HEK293 (cell line): ENCODE measurements at regions of chr17 and their contacts with region 1.

Region 1: DNA sequence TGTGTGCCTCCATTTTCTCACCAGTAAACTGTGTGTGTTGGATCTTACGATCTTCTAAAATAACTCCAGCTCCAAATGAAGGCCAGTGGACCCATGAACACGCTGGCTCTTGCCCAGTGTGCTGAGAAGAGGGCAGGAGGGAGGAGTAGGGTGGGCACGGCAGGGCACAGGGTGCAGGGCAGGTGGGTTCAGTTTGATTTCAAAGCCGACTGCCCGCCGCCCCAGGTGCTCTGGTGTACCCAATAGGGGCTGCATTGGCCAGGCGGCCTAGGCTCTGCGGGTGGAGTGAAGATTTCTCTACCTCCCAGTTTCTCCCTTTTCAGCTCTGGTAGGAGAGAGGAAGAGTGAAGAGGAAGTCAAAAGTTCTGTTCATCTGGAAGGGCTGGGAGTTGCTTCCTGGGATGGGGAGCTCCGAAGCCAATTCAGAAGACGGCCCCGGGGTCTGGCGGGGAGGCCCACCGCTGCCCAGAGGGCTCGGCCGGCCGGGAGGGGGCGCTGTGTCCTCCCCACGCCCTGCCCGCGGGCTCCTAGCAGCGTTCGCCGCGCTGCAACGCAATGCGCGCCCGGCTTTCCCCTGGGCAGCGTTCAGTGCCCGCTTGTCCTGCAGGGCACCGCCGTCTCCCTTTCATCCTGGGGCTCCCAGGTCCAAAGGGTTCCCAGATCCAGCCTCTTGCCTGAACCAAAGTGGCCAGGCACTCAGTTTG is 1.1 kb upstream of the CRHR1 start:
- H3K4me3 ChIP-seq: peak overlapping the region; percentile 56
- H3K27ac ChIP-seq: peak overlapping the region; percentile 51; the same call in 1 of the 2 replicates
- H3K4me1 ChIP-seq: no peaks in the 10 kb centered on the region
- CTCF ChIP-seq: peak; percentile 82

Region 2: GRCh38 chr17:45640141-45640850 is 142.7 kb before region 1 on chr17:
- CTCF ChIA-PET with region 1: interaction called, 18 read pairs
- POLR2A ChIA-PET with region 1: interaction called, 3 read pairs
- H3K4me3 ChIP-seq: no peak overlapping the region
- H3K27ac ChIP-seq: no peak overlapping the region
- H3K4me1 ChIP-seq: no peaks in the 10 kb centered on the region
- CTCF ChIP-seq: peak; percentile 89

Region 3: DNA sequence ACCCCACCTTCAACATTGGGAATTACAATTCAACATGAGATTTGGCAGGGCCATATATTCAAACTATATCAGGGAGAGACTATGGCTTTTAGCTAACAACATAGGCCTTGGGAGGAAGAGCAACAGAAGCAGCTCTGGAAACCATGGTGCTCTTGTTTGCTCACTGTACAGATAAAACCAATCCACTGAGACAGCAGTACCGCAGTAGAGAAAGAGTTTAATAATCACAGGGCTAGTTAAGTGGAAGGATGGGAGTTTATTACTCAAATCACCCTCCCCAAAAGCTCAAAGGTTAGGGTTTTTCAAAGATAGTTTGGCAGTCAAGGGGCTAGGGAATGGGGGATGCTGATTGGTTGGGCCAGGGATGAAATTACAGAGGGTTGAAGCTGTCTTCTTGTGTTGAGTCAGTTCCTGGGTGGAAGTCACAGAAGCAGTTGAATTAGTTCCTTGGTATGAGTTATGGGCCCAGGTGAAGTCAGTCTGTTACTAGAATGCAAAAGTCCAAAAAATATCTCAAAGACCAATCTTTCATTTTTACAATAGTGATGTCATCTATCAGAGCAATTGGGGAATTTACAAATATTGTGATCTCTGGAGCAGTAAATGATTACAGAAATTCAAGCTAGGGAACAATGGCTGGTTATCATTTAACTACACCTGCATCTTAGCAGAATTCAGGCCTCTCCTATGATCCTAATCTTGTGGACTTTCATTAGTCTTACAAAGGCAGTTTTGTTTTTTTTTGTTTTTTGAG is 51.4 kb before region 1 on chr17:
- CTCF ChIA-PET with region 1: interaction called, 12 read pairs
- POLR2A ChIA-PET with region 1: no interaction called
- H3K4me3 ChIP-seq: no peak overlapping the region
- H3K27ac ChIP-seq: no peak overlapping the region
- H3K4me1 ChIP-seq: no peaks in the 10 kb centered on the region
- CTCF ChIP-seq: no peak

Region 4: DNA sequence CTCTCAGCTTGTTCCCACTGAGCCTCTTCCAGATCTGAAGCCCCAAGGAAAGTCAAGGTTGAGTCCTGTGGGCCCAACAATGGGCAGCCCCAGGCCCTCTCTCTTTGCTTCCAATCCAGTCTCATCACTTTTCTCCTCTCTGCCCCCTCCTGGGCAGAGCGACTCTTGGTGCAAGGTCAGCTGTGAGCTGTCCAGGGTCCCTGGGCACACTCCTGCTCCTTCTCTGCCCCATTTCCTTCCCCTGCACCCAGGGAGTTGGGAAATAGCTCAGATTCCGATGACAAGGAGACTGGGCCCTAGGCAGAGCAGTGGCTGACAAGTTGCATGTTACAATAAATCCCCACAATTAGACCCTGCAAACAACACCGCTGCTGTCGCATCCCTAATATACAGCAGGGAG is 15.0 kb before region 1 on chr17:
- CTCF ChIA-PET with region 1: interaction called, 53 read pairs
- POLR2A ChIA-PET with region 1: interaction called, 3 read pairs
- H3K4me3 ChIP-seq: no peak overlapping the region
- H3K27ac ChIP-seq: no peak overlapping the region
- H3K4me1 ChIP-seq: no peaks in the 10 kb centered on the region
- CTCF ChIP-seq: no peak

Region 5: GRCh38 chr17:45794840-45795239 is 11.8 kb after region 1 on chr17:
- CTCF ChIA-PET with region 1: interaction called, 31 read pairs
- POLR2A ChIA-PET with region 1: interaction called, 3 read pairs
- H3K4me3 ChIP-seq: no peak overlapping the region
- H3K27ac ChIP-seq: no peak overlapping the region
- H3K4me1 ChIP-seq: peaks cover 3% of the 10 kb centered on the region; the same call in 1 of the 2 replicates
- CTCF ChIP-seq: peak; percentile 22; the same call in 1 of the 2 replicates

Region 6: DNA sequence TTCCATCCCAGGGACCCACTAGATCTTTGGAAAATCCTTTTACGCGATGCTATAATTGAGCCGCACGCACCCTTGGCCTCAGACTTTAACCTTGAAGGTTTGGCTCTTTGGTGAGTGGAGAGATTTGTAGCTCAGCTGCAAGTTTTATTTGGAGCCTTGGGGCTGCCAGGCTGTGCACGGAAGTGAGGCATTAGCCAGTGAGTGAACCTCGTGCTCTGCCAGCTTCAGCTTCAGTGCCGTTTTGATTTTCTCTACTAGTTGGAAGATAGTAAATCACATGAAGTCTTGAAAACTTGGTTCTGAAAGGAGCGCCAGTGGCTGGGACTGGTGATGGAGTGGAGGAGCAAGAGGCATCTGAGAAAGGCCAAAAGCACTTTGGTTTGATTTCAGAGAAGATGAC is 18.4 kb after region 1 on chr17:
- CTCF ChIA-PET with region 1: interaction called, 25 read pairs
- POLR2A ChIA-PET with region 1: interaction called, 3 read pairs
- H3K4me3 ChIP-seq: no peak overlapping the region
- H3K27ac ChIP-seq: no peak overlapping the region
- H3K4me1 ChIP-seq: no peaks in the 10 kb centered on the region
- CTCF ChIP-seq: no peak

Region 7: DNA sequence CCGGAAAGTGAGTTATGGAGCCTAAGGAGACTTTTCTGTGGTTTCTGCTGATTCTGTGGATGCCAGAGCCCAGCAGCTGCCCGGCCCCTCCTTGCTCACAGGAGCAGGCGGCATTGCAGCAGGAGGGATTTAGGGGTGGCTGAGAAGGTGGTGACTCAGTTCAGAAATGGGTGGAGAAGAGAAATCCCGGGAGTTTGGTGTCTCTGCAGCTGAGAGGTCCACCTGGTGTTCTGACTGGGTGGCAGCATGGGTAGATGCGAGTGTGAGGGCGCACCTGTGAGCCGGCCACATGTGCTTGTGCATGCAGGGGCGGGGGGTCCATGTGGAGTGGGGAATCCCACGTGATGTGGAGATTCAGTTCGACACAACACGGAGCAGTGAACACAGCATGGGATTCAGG is 45.6 kb after region 1 on chr17:
- CTCF ChIA-PET with region 1: interaction called, 35 read pairs
- POLR2A ChIA-PET with region 1: interaction called, 3 read pairs
- H3K4me3 ChIP-seq: no peak overlapping the region
- H3K27ac ChIP-seq: no peak overlapping the region
- H3K4me1 ChIP-seq: no peaks in the 10 kb centered on the region
- CTCF ChIP-seq: no peak

Region 8: GRCh38 chr17:45905814-45906213 is 122.8 kb after region 1 on chr17:
- CTCF ChIA-PET with region 1: no interaction called
- POLR2A ChIA-PET with region 1: no interaction called
- H3K4me3 ChIP-seq: no peak overlapping the region
- H3K27ac ChIP-seq: no peak overlapping the region
- H3K4me1 ChIP-seq: peaks cover 2% of the 10 kb centered on the region; the same call in 1 of the 2 replicates
- CTCF ChIP-seq: no peak

Region 9: GRCh38 chr17:45918241-45918745 is 135.3 kb after region 1 on chr17:
- CTCF ChIA-PET with region 1: no interaction called
- POLR2A ChIA-PET with region 1: no interaction called
- H3K4me3 ChIP-seq: no peak overlapping the region
- H3K27ac ChIP-seq: no peak overlapping the region
- H3K4me1 ChIP-seq: no peaks in the 10 kb centered on the region
- CTCF ChIP-seq: no peak

Region 10: DNA sequence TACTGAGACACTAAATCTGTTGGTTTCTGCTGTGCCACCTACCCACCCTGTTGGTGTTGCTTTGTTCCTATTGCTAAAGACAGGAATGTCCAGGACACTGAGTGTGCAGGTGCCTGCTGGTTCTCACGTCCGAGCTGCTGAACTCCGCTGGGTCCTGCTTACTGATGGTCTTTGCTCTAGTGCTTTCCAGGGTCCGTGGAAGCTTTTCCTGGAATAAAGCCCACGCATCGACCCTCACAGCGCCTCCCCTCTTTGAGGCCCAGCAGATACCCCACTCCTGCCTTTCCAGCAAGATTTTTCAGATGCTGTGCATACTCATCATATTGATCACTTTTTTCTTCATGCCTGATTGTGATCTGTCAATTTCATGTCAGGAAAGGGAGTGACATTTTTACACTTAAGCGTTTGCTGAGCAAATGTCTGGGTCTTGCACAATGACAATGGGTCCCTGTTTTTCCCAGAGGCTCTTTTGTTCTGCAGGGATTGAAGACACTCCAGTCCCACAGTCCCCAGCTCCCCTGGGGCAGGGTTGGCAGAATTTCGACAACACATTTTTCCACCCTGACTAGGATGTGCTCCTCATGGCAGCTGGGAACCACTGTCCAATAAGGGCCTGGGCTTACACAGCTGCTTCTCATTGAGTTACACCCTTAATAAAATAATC is 230.6 kb after region 1 on chr17:
- CTCF ChIA-PET with region 1: no interaction called
- POLR2A ChIA-PET with region 1: no interaction called
- H3K4me3 ChIP-seq: no peak overlapping the region
- H3K27ac ChIP-seq: no peak overlapping the region
- H3K4me1 ChIP-seq: no peaks in the 10 kb centered on the region
- CTCF ChIP-seq: no peak